ENCODE measurements at regions of chr2 and their contacts with region 1.

Region 1: GRCh38 chr2:216651351-216651881 is 18.2 kb downstream of the IGFBP2 start:
- DNase-seq: peak; percentile 70
- H3K4me3 Mint-ChIP-seq: peak overlapping the region; percentile 31
- H3K27ac Mint-ChIP-seq: peak overlapping the region; percentile 99
- H3K4me1 Mint-ChIP-seq: peaks cover 48% of the 10 kb centered on the region
- H3K27me3 Mint-ChIP-seq: no peaks in the 10 kb centered on the region
- CTCF ChIP-seq: no peak

Region 2: DNA sequence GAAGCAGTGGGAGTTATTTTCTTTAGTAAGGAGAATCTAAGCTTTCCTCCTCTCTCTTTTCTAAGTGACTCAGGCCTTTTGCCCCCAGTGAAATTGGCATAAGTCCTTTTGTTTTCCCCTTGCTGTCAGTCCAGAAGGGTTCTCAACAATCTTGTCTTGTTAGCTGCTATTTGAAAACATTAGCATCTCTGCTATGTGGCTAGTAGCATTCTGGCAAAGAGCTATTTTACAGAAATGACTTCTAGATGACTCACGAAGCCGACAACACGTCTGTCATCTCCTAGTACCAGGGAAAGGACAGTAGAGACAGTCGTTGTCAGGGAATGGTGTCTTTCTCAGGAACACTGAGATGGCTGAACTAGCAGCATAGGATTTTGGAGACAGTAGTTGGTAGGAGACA is 224.5 kb before region 1 on chr2:
- CTCF ChIA-PET with region 1: no interaction called
- intact Hi-C with region 1: no loop called
- DNase-seq: no peak
- H3K4me3 Mint-ChIP-seq: no peak overlapping the region
- H3K27ac Mint-ChIP-seq: no peak overlapping the region
- H3K4me1 Mint-ChIP-seq: no peaks in the 10 kb centered on the region
- H3K27me3 Mint-ChIP-seq: no peaks in the 10 kb centered on the region
- CTCF ChIP-seq: no peak

Region 3: GRCh38 chr2:216603010-216603883 is 48.2 kb before region 1 on chr2:
- CTCF ChIA-PET with region 1: no interaction called
- intact Hi-C with region 1: loop called (anchors 5 kb)
- DNase-seq: peak; percentile 51
- H3K4me3 Mint-ChIP-seq: no peak overlapping the region
- H3K27ac Mint-ChIP-seq: peak overlapping the region; percentile 12
- H3K4me1 Mint-ChIP-seq: peaks cover 24% of the 10 kb centered on the region
- H3K27me3 Mint-ChIP-seq: peaks cover 21% of the 10 kb centered on the region
- CTCF ChIP-seq: no peak

Region 4: GRCh38 chr2:216636551-216637450 is 14.6 kb before region 1 on chr2:
- CTCF ChIA-PET with region 1: no interaction called
- intact Hi-C with region 1: loop called (anchors 2 kb)
- DNase-seq: peak; percentile 82
- H3K4me3 Mint-ChIP-seq: peak overlapping the region; percentile 33
- H3K27ac Mint-ChIP-seq: peak overlapping the region; percentile 39
- H3K4me1 Mint-ChIP-seq: peaks cover 51% of the 10 kb centered on the region
- H3K27me3 Mint-ChIP-seq: peaks cover 50% of the 10 kb centered on the region
- CTCF ChIP-seq: no peak

Region 5: GRCh38 chr2:216666461-216667233 is 15.2 kb after region 1 on chr2:
- CTCF ChIA-PET with region 1: interaction called, 12 read pairs
- intact Hi-C with region 1: no loop called
- DNase-seq: peak; percentile 77
- H3K4me3 Mint-ChIP-seq: no peak overlapping the region
- H3K27ac Mint-ChIP-seq: no peak overlapping the region
- H3K4me1 Mint-ChIP-seq: peaks cover 18% of the 10 kb centered on the region
- H3K27me3 Mint-ChIP-seq: peaks cover 35% of the 10 kb centered on the region
- CTCF ChIP-seq: peak; percentile 97

Measured in Calu3 (cell line).